ENCODE measurements at regions of chr17 and their contacts with region 1.

Region 1: DNA sequence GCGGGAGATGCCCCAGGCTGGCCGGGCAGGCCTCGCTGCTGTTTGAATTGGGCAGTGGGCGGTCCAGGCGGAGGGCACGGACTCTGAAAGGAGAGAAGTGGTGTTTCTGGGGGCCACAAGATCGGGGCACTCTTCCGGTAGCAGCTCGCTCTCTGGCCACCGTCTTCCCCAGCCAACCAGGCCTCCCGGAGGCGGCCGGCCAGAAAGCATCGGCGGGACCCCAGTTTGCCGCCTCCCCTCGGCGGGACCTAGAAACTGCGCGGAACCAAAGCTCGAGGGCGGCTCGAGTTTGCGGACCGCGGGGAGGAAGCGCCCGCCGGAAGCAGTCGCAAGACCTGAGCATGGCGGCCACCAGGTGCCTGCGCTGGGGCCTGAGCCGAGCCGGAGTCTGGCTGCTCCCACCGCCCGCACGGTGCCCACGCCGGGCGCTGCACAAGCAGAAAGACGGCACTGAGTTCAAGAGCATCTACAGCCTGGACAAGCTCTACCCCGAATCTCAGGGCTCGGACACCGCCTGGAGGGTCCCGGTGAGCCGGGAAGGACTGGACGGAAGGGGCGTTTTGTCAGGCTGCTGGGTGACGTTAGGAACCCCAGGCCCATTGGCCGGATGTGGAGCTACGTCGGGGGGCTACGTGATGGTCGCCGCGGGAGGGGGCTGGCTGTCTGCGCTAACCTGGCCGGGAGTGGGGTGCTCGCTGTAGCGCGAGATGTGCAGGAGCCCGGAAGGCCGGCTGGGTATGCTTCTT is at the start of gene MRPL58:
- DNase-seq: peak; percentile 62 to 88 (median 78)
- ATAC-seq: peak; percentile 92 to 94
- H3K4me3 Mint-ChIP-seq: peak within 1 kb of the TSS; percentile 89 to 97 (median 94)
- H3K27ac Mint-ChIP-seq: peak within 1 kb of the TSS; percentile 87 to 97 (median 94)
- H3K4me1 Mint-ChIP-seq: peaks cover 21 to 36% (median 32%) of the 10 kb centered on the region in 4 donors
- H3K27me3 Mint-ChIP-seq: no peaks in the 10 kb centered on the region
- polyA plus RNA-seq, gene MRPL58: 44.9 to 58.1 (median 53.6) TPM

Region 2: GRCh38 chr17:74961657-74962490 is 50.6 kb before region 1 on chr17:
- POLR2A ChIA-PET with region 1: interaction called, 19 read pairs
- DNase-seq: peak; percentile 63 to 90 (median 79)
- ATAC-seq: peak; percentile 82 to 87
- H3K4me3 Mint-ChIP-seq: peak overlapping the region in 1 of 10 donors; percentile 3
- H3K27ac Mint-ChIP-seq: peak overlapping the region in 2 of 10 donors; percentile 53 to 86
- H3K4me1 Mint-ChIP-seq: peaks cover 3 to 10% (median 4%) of the 10 kb centered on the region in 4 donors
- H3K27me3 Mint-ChIP-seq: no peaks in the 10 kb centered on the region

Region 3: DNA sequence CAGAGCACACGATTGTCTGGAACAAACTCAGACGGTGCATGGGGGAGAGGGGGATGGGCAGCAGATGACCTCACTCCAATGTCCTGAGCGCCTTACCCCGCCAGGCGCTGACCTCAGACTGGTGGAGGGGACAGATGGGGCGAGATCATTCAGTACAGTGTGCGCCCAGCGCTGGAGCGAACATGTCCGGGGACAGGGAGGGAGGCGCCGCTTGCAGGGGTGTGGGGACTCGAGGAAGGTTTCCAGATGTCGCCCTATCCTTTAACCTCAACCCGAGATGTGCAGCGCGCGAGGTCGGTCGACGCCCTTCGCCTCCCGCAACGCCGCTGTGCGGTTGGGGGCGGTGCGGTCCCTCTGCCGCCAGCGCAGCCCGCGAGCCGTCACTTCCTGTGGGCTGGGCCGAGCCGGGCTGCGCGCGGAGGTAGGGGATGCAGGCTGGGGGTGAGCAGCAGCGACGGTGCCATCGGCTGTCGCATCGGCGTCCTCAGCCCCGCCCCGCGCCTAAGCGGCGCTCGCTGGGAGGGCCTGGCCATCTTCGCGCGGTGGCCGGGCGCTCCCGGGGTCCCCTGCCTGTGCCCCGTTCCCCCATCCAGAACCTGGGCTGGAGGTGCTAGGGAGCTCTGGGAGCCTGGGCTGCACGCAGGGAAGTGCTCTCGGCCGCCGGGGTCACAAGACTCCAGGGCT is 30.4 kb before region 1 on chr17:
- POLR2A ChIA-PET with region 1: interaction called, 35 read pairs
- DNase-seq: peak; percentile 64 to 90 (median 80)
- ATAC-seq: peak; percentile 91 to 94
- H3K4me3 Mint-ChIP-seq: peak overlapping the region; percentile 86 to 94 (median 90)
- H3K27ac Mint-ChIP-seq: peak overlapping the region; percentile 71 to 98 (median 92)
- H3K4me1 Mint-ChIP-seq: peaks cover 6 to 32% (median 23%) of the 10 kb centered on the region in 4 donors
- H3K27me3 Mint-ChIP-seq: peaks cover 0 to 11% (median 0%) of the 10 kb centered on the region in 5 donors

Region 4: GRCh38 chr17:75024686-75025397 is 12.3 kb after region 1 on chr17:
- POLR2A ChIA-PET with region 1: interaction called, 14 read pairs
- DNase-seq: peak in 6 of 10 donors; percentile 34 to 62 (median 46)
- ATAC-seq: peak; percentile 46 to 70
- H3K4me3 Mint-ChIP-seq: peak overlapping the region in 9 of 10 donors; percentile 8 to 68 (median 59)
- H3K27ac Mint-ChIP-seq: peak overlapping the region in 9 of 10 donors; percentile 46 to 85 (median 71)
- H3K4me1 Mint-ChIP-seq: peaks cover 7 to 39% (median 16%) of the 10 kb centered on the region in 4 donors
- H3K27me3 Mint-ChIP-seq: no peaks in the 10 kb centered on the region

Region 5: DNA sequence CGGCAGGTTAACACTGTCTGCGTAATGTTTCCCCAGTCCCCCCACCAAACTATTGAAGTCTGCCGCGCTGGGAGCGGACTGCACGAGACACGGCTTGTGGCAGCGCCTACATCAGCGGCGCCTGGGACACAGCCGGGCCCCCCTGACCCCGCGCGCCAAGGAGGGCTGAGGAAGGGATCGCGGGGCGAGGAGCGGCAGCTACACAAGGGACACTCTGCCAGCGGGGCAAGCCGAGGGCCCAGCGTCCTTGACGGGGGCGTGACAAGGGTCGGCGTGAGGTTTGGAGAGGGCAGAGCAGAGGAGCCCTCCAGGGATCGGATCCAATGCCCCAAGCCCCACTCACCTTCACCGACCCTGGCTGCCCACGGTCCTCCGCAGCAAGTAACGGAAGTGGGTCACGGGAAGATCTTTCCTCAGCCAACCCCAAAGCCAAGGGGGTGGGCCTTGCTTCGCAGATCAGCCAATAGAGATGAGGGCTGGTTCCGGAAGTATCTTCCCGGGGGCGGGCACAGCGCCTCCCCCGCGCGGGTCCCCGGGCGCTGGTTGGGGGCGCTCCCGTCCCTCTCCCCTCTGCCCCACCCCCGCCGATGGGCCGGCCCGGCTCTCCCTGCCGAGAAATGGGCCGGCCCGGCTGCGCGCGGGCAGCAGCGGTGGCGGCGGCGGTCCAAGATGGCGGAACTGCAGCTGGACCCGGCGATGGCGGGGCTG is 34.2 kb after region 1 on chr17 and contains the starts of genes ATP5PD and KCTD2:
- POLR2A ChIA-PET with region 1: interaction called, 37 read pairs
- DNase-seq: peak; percentile 86 to 97 (median 91)
- ATAC-seq: peak; percentile 92 to 93
- H3K4me3 Mint-ChIP-seq: peak within 1 kb of the TSS; percentile 95 to 100 (median 96)
- H3K27ac Mint-ChIP-seq: peak within 1 kb of the TSS; percentile 91 to 98 (median 98)
- H3K4me1 Mint-ChIP-seq: peaks cover 14 to 54% (median 47%) of the 10 kb centered on the region in 4 donors
- H3K27me3 Mint-ChIP-seq: no peaks in the 10 kb centered on the region
- polyA plus RNA-seq, gene ATP5PD: 406 to 455 (median 449) TPM
- polyA plus RNA-seq, gene KCTD2: 6.8 to 10.9 (median 7.8) TPM

Region 6: GRCh38 chr17:75131280-75132017 is 118.9 kb after region 1 on chr17 and contains the start of gene NT5C:
- POLR2A ChIA-PET with region 1: interaction called, 15 read pairs
- DNase-seq: peak; percentile 38 to 78 (median 64)
- ATAC-seq: peak; percentile 83 to 86
- H3K4me3 Mint-ChIP-seq: peak within 1 kb of the TSS; percentile 83 to 94 (median 90)
- H3K27ac Mint-ChIP-seq: peak within 1 kb of the TSS; percentile 83 to 94 (median 91)
- H3K4me1 Mint-ChIP-seq: peaks cover 6 to 15% (median 11%) of the 10 kb centered on the region in 4 donors
- H3K27me3 Mint-ChIP-seq: no peaks in the 10 kb centered on the region
- polyA plus RNA-seq, gene NT5C: 46.0 to 53.6 (median 50.6) TPM